ENCODE measurements at regions of chr9 and their contacts with region 1.

Region 1: GRCh38 chr9:91193658-91194391 is 167.9 kb downstream of the AUH start:
- DNase-seq: peak; percentile 88
- ATAC-seq: peak; percentile 79
- H3K4me3 Mint-ChIP-seq: peak overlapping the region; percentile 79
- H3K27ac Mint-ChIP-seq: peak overlapping the region; percentile 99
- H3K4me1 Mint-ChIP-seq: peaks cover 50% of the 10 kb centered on the region
- H3K27me3 Mint-ChIP-seq: no peaks in the 10 kb centered on the region

Region 2: DNA sequence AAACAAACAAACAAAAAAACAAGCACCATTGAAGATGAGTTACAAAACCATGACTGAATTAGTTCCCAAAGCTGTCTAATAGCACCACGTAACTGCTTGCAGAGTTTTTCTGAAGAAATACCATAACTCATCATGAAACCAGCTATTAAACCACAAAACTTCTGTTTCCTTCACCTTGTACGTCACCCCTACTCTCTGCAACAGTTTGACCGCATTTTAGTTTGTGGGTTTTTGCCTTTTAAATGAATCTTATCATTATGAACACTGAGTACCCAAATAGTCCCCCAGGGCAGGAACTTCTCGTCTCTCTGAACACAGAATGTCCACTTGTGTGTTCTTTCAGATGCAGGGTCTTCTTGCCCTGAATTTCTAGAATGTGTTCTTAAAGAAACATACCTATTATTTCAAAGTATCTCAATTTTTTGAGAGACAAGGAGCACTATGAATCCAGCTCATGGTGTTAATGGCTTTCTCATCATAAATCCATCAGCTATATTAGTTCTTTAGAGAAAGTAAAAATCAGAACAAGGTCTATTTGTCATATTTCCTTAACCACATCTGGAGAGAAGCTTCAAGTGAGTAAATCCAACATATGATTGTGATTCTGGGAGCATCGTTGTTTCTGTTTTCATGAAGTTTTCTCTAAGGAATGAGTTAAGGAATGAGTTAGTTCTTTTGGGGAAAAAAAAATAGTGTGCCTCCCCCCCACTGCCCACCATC is 42.7 kb before region 1 on chr9:
- POLR2A ChIA-PET with region 1: interaction called, 11 read pairs
- DNase-seq: no peak
- ATAC-seq: peak; percentile 89
- H3K4me3 Mint-ChIP-seq: peak overlapping the region; percentile 53
- H3K27ac Mint-ChIP-seq: peak overlapping the region; percentile 88
- H3K4me1 Mint-ChIP-seq: peaks cover 70% of the 10 kb centered on the region
- H3K27me3 Mint-ChIP-seq: no peaks in the 10 kb centered on the region

Region 3: GRCh38 chr9:91177661-91178280 is 16.1 kb before region 1 on chr9:
- POLR2A ChIA-PET with region 1: interaction called, 13 read pairs
- DNase-seq: peak; percentile 61
- ATAC-seq: peak; percentile 72
- H3K4me3 Mint-ChIP-seq: peak overlapping the region; percentile 61
- H3K27ac Mint-ChIP-seq: peak overlapping the region; percentile 90
- H3K4me1 Mint-ChIP-seq: peaks cover 35% of the 10 kb centered on the region
- H3K27me3 Mint-ChIP-seq: no peaks in the 10 kb centered on the region